ENCODE measurements at regions of chr5 and their contacts with region 1.

Region 1: GRCh38 chr5:150778517-150779396 is at the start of gene SMIM3:
- DNase-seq: peak; percentile 93
- ATAC-seq: peak; percentile 83
- total RNA-seq, gene SMIM3: 19.8 TPM

Region 2: GRCh38 chr5:150700594-150701293 is 78.0 kb before region 1 on chr5 and contains the start of gene RBM22:
- intact Hi-C with region 1: loop called (anchors 5 kb)
- DNase-seq: peak; percentile 97
- ATAC-seq: peak; percentile 99
- total RNA-seq, gene RBM22: 30.5 TPM

Region 3: DNA sequence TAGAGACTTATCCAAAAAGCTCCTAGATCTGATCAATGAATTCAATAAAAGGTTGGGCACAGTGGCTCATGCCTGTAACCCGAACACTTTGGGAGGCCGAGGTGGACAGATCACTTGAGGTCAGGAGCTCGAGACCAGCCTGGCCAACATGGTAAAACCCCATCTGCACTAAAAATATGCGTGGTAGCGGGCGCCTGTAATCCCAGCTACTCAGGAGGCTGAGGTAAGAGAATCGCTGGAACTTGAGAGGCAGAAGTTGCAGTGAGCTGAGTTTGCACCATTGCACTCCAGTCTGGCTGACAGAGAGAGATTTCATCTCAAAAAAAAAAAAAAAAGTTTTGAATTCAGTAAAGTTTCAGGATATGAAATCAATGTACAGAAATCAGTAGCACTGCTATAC is 39.9 kb before region 1 on chr5:
- intact Hi-C with region 1: no loop called
- DNase-seq: no peak
- ATAC-seq: no peak

Region 4: GRCh38 chr5:150758531-150759333 is 20.0 kb before region 1 on chr5 and contains the start of gene DCTN4:
- intact Hi-C with region 1: loop called (anchors 2 kb)
- DNase-seq: peak; percentile 98
- ATAC-seq: peak; percentile 94
- total RNA-seq, gene DCTN4: 46.4 TPM

Measured in Right ventricle myocardium inferior (tissue), 1 donor.